ENCODE measurements at regions of chr18 and their contacts with region 1.

Region 1: GRCh38 chr18:63320046-63320689 is 599 bp upstream of the BCL2 start:
- DNase-seq: no peak
- ATAC-seq: peak; percentile 37
- H3K4me3 ChIP-seq: peak overlapping the region; percentile 54; the same call in 1 of the 2 replicates
- H3K27ac ChIP-seq: peak overlapping the region; percentile 90
- H3K4me1 ChIP-seq: peaks cover 20% of the 10 kb centered on the region
- H3K27me3 ChIP-seq: no peaks in the 10 kb centered on the region
- CTCF ChIP-seq: no peak; a peak in 1 of 6 replicates
- EP300 ChIP-seq: no peak
- POLR2A ChIP-seq: no peak; the same call in 1 of the 2 replicates
- RAD21 ChIP-seq: no peak

Region 2: GRCh38 chr18:62714671-62715435 is 605.3 kb before region 1 on chr18:
- CTCF ChIA-PET with region 1: no interaction called
- POLR2A ChIA-PET with region 1: no interaction called
- RAD21 ChIA-PET with region 1: no interaction called
- SMC1A ChIA-PET with region 1: no interaction called
- in situ Hi-C with region 1: loop called (anchors 25 kb)
- intact Hi-C with region 1: loop called (anchors 10 kb)
- DNase-seq: peak; percentile 93
- ATAC-seq: peak; percentile 83
- H3K4me3 ChIP-seq: peak overlapping the region; percentile 79
- H3K27ac ChIP-seq: no peak overlapping the region
- H3K4me1 ChIP-seq: 0 out of 2 replicates have a peak, but pooled peaks cover 2% of the 10 kb centered on the region
- H3K27me3 ChIP-seq: no peaks in the 10 kb centered on the region
- CTCF ChIP-seq: peak; percentile 73 to 86 (median 78)
- EP300 ChIP-seq: peak in 1 of 2 experiments; percentile 31; a peak in 1 of 4 replicates
- POLR2A ChIP-seq: no peak; the same call in 1 of the 2 replicates
- RAD21 ChIP-seq: peak; percentile 79

Region 3: DNA sequence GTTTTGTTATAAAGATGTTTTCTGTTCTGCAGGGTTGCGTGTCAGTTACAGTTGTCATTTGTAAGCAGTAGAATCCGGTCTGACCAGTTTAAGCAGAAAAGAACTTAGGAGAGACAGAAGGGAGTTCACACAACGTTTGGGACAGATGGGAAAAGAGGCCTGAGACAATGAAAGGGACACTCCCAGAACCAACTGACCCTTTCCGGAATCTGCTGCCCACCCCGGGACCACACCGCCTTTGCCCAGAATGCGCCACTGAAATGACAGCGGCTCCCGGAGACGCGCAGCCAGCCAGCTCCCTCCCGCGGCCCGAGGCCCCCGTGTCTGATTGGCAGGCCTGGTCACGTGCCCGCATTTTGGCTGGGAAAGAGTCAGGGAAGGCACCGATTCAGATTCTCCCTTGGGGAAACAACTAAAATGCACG is 245.2 kb before region 1 on chr18:
- CTCF ChIA-PET with region 1: interaction called, 7 read pairs
- POLR2A ChIA-PET with region 1: no interaction called
- RAD21 ChIA-PET with region 1: interaction called, 6 read pairs
- SMC1A ChIA-PET with region 1: interaction called, 4 read pairs
- in situ Hi-C with region 1: no loop called
- intact Hi-C with region 1: loop called (anchors 1 kb)
- DNase-seq: no peak
- ATAC-seq: peak; percentile 40
- H3K4me3 ChIP-seq: peak overlapping the region; percentile 45; the same call in 1 of the 2 replicates
- H3K27ac ChIP-seq: peak overlapping the region; percentile 60
- H3K4me1 ChIP-seq: peaks cover 17% of the 10 kb centered on the region
- H3K27me3 ChIP-seq: no peaks in the 10 kb centered on the region
- CTCF ChIP-seq: no peak
- EP300 ChIP-seq: no peak
- POLR2A ChIP-seq: peak; percentile 76
- RAD21 ChIP-seq: no peak

Region 4: DNA sequence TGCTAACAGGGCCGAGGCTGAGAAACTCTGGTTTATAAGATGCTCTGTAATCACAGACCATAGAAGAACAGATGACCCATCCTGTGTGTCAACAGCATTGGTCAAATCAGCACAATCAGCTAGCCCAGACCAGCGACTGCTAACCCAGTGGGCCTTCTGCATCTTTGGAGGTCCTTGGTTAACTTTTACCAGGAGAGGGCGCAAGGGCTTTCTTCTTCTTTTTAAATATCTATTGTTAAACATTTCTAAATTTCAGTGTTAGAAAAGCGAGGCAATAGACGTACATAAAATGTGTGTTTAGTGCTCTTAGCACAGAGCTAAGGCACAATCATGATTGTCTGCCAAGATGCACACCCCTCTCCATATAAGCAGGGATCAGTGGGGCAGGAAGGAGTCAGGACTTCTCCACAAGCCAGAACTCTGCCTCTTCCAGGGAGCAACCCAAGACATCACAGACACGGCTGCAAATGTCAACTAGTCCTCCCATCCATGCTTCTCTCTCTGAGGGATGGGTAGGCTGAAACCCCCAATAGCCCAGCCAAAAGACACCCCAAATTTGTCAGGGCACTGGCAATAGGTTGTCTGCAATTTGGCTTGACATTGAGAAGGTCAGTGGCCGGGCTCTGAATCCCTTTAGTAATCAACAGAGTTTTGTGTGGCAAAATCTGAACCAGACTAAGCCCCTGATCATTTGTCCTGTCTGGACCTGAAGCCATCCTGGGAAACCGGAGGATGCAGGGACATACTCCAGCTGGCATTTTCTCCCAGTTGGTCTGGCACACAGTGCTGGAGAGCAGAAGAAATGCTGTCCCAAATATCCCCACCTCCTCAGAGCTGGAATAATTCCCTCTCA is 188.8 kb before region 1 on chr18:
- CTCF ChIA-PET with region 1: interaction called, 95 read pairs
- POLR2A ChIA-PET with region 1: interaction called, 26 read pairs
- RAD21 ChIA-PET with region 1: interaction called, 50 read pairs
- SMC1A ChIA-PET with region 1: interaction called, 50 read pairs
- in situ Hi-C with region 1: no loop called
- intact Hi-C with region 1: loop called (anchors 1 kb)
- DNase-seq: no peak
- ATAC-seq: peak; percentile 84
- H3K4me3 ChIP-seq: no peak overlapping the region
- H3K27ac ChIP-seq: peak overlapping the region; percentile 49
- H3K4me1 ChIP-seq: peaks cover 24% of the 10 kb centered on the region
- H3K27me3 ChIP-seq: no peaks in the 10 kb centered on the region
- CTCF ChIP-seq: peak; percentile 52 to 65 (median 59)
- EP300 ChIP-seq: no peak
- POLR2A ChIP-seq: no peak
- RAD21 ChIP-seq: peak; percentile 76

Region 5: GRCh38 chr18:63161761-63162195 is 158.4 kb before region 1 on chr18:
- CTCF ChIA-PET with region 1: interaction called, 119 read pairs
- POLR2A ChIA-PET with region 1: interaction called, 144 read pairs
- RAD21 ChIA-PET with region 1: interaction called, 172 read pairs
- SMC1A ChIA-PET with region 1: interaction called, 161 read pairs
- in situ Hi-C with region 1: no loop called
- intact Hi-C with region 1: loop called (anchors 1 kb)
- DNase-seq: peak; percentile 98
- ATAC-seq: peak; percentile 60
- H3K4me3 ChIP-seq: peak overlapping the region; percentile 62; the same call in 1 of the 2 replicates
- H3K27ac ChIP-seq: peak overlapping the region; percentile 100
- H3K4me1 ChIP-seq: peaks cover 59% of the 10 kb centered on the region
- H3K27me3 ChIP-seq: no peaks in the 10 kb centered on the region
- CTCF ChIP-seq: no peak
- EP300 ChIP-seq: peak; percentile 98
- POLR2A ChIP-seq: peak; percentile 94
- RAD21 ChIP-seq: peak; percentile 35

Region 6: DNA sequence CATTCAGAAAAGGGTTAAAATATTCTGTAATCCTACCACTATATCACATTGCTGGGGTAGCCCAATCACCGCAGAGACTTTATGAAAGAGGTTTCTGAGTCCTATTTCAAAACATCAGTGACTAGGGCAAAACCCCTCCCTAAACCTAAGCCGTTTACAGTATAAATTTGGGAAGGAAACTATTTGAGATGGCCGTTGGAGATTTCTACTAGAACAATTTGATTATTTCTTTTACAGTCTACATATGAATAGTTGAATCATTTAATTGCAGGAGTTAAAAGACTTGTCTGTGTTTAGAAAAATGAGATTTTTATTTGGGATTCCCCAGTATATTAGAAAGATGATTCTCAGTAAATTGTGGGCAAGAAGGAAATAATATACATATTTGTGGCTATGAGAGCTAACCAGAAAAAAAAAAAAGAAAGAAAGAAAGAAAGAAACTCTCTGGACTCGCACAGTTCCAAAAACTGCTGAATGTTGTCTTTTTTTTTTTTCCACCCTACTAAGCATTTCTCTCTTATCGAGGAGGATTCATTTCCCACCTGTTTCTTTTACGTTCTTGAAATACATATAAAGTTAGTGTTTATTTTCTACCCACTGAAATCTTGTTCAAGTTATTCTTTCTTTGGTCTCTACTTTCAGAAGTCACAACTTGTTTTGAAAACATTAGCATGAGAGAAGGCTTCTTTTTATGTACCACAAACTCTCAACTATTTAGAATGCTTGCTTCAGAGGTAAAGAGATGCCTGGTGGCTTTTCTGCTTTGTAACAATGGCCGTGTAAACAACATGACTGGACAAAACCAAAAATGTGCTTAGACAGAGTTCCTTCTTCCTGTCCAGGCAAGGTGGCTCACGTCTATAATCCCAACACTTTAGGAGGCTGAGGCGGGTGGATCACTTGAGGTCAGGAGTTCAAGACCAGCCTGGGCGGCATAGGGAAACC is 66.5 kb before region 1 on chr18:
- CTCF ChIA-PET with region 1: interaction called, 4 read pairs
- POLR2A ChIA-PET with region 1: interaction called, 4 read pairs
- RAD21 ChIA-PET with region 1: interaction called, 3 read pairs
- SMC1A ChIA-PET with region 1: interaction called, 13 read pairs
- in situ Hi-C with region 1: no loop called
- intact Hi-C with region 1: loop called (anchors 2 kb)
- DNase-seq: no peak
- ATAC-seq: peak; percentile 24
- H3K4me3 ChIP-seq: peak overlapping the region; percentile 22; the same call in 1 of the 2 replicates
- H3K27ac ChIP-seq: peak overlapping the region; percentile 64
- H3K4me1 ChIP-seq: peaks cover 35% of the 10 kb centered on the region
- H3K27me3 ChIP-seq: no peaks in the 10 kb centered on the region
- CTCF ChIP-seq: no peak
- EP300 ChIP-seq: no peak
- POLR2A ChIP-seq: no peak
- RAD21 ChIP-seq: no peak

Region 7: GRCh38 chr18:63339920-63340484 is 19.8 kb after region 1 on chr18:
- CTCF ChIA-PET with region 1: interaction called, 49 read pairs
- POLR2A ChIA-PET with region 1: no interaction called
- RAD21 ChIA-PET with region 1: interaction called, 4 read pairs
- SMC1A ChIA-PET with region 1: interaction called, 6 read pairs
- in situ Hi-C with region 1: no loop called
- intact Hi-C with region 1: no loop called
- DNase-seq: no peak
- ATAC-seq: peak; percentile 82
- H3K4me3 ChIP-seq: no peak overlapping the region
- H3K27ac ChIP-seq: no peak overlapping the region
- H3K4me1 ChIP-seq: no peaks in the 10 kb centered on the region
- H3K27me3 ChIP-seq: no peaks in the 10 kb centered on the region
- CTCF ChIP-seq: peak; percentile 39 to 59 (median 53)
- EP300 ChIP-seq: no peak
- POLR2A ChIP-seq: no peak
- RAD21 ChIP-seq: peak; percentile 57

Region 8: GRCh38 chr18:63590373-63590772 is 270.2 kb after region 1 on chr18:
- CTCF ChIA-PET with region 1: no interaction called
- POLR2A ChIA-PET with region 1: no interaction called
- RAD21 ChIA-PET with region 1: no interaction called
- SMC1A ChIA-PET with region 1: no interaction called
- in situ Hi-C with region 1: no loop called
- intact Hi-C with region 1: no loop called
- DNase-seq: no peak
- ATAC-seq: no peak
- H3K4me3 ChIP-seq: no peak overlapping the region
- H3K27ac ChIP-seq: no peak overlapping the region
- H3K4me1 ChIP-seq: no peaks in the 10 kb centered on the region
- H3K27me3 ChIP-seq: peaks cover 0 to 3% of the 10 kb centered on the region in 2 experiments; a peak in 3 of 4 replicates
- CTCF ChIP-seq: no peak
- EP300 ChIP-seq: no peak
- POLR2A ChIP-seq: no peak
- RAD21 ChIP-seq: no peak

Region 9: DNA sequence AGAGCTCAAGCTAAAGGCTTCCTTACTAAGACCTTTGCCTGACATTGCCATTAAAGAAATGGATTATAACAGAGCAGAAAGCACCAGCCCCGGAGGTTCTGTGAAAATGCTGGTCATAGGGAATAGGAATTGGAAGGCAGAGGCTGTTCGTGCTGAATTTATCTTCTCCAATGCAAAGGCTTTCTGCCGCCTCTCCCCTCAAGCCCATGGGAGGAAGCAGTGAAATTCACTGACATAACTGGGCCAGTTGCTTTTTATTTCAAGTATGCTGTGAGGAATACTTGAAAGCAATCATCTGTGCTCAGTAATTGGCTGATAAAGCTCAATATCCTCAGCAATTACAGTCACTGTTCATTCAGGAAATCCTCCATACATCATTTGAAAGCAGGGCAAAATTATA is 914.2 kb after region 1 on chr18:
- CTCF ChIA-PET with region 1: no interaction called
- POLR2A ChIA-PET with region 1: no interaction called
- RAD21 ChIA-PET with region 1: no interaction called
- SMC1A ChIA-PET with region 1: no interaction called
- in situ Hi-C with region 1: no loop called
- intact Hi-C with region 1: no loop called
- DNase-seq: no peak
- ATAC-seq: no peak
- H3K4me3 ChIP-seq: no peak overlapping the region
- H3K27ac ChIP-seq: no peak overlapping the region
- H3K4me1 ChIP-seq: no peaks in the 10 kb centered on the region
- H3K27me3 ChIP-seq: no peaks in the 10 kb centered on the region
- CTCF ChIP-seq: no peak
- EP300 ChIP-seq: no peak
- POLR2A ChIP-seq: no peak
- RAD21 ChIP-seq: no peak